PC-9 (cell line): ENCODE measurements at regions of chr5 and their contacts with region 1.

Region 1: GRCh38 chr5:130520211-130520610 is 615.9 kb downstream of the CHSY3 start:
- DNase-seq: peak; percentile 8 to 63
- H3K4me3 ChIP-seq: no peak overlapping the region
- H3K27ac ChIP-seq: no peak overlapping the region
- H3K4me1 ChIP-seq: peaks cover 5% of the 10 kb centered on the region
- H3K27me3 ChIP-seq: no peaks in the 10 kb centered on the region
- CTCF ChIP-seq: no peak

Region 2: DNA sequence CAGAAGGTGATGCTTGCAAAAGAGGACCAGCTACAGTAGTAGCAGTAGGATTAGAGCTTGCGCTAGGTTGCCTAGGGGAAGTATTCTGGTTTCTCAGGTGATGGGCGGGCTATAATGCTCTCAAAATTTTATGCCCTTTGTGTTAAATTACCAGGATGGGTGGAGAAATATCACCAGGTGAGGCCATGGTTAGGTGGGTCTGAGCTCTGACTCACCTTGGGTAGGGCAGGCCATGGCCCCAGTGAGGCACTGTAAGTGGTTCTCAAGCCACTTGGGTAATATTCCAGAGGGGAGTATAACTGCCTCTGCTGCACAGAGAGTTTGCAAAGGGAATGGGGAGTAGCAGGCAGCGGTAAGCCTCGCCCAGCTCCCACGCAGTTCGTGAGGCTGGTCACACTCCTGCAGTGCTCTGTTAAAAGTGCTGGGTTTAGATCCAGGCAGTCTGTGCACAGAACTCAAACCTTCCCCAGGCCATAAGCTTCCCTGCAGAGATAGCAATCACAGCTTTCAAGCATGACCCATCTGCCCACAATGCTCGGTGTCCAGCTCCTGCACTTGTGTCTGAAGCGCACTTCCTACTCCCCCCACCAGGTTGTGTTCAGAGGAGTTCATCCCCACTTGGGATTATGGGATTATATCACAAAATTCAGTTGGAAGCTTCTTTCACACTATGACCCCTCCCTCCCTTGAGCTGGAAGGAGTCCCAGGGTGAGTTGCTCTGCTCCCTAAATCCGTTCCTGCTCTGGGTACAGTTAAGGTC is 41.0 kb before region 1 on chr5:
- CTCF ChIA-PET with region 1: no interaction called
- POLR2A ChIA-PET with region 1: interaction called, 10 read pairs
- intact Hi-C with region 1: no loop called
- DNase-seq: peak; percentile 37 to 53
- H3K4me3 ChIP-seq: no peak overlapping the region
- H3K27ac ChIP-seq: no peak overlapping the region
- H3K4me1 ChIP-seq: no peaks in the 10 kb centered on the region
- H3K27me3 ChIP-seq: no peaks in the 10 kb centered on the region
- CTCF ChIP-seq: no peak

Region 3: GRCh38 chr5:130568791-130569190 is 48.6 kb after region 1 on chr5:
- CTCF ChIA-PET with region 1: no interaction called
- POLR2A ChIA-PET with region 1: interaction called, 18 read pairs
- intact Hi-C with region 1: no loop called
- DNase-seq: no peak
- H3K4me3 ChIP-seq: no peak overlapping the region
- H3K27ac ChIP-seq: no peak overlapping the region
- H3K4me1 ChIP-seq: no peaks in the 10 kb centered on the region
- H3K27me3 ChIP-seq: no peaks in the 10 kb centered on the region
- CTCF ChIP-seq: no peak

Region 4: GRCh38 chr5:130805648-130806047 is 285.4 kb after region 1 on chr5:
- CTCF ChIA-PET with region 1: no interaction called
- POLR2A ChIA-PET with region 1: no interaction called
- intact Hi-C with region 1: no loop called
- DNase-seq: no peak
- H3K4me3 ChIP-seq: no peak overlapping the region
- H3K27ac ChIP-seq: no peak overlapping the region
- H3K4me1 ChIP-seq: no peaks in the 10 kb centered on the region
- H3K27me3 ChIP-seq: no peaks in the 10 kb centered on the region
- CTCF ChIP-seq: no peak

Region 5: GRCh38 chr5:131983244-131983771 is 1463.1 kb after region 1 on chr5:
- CTCF ChIA-PET with region 1: no interaction called
- POLR2A ChIA-PET with region 1: no interaction called
- intact Hi-C with region 1: no loop called
- DNase-seq: no peak
- H3K4me3 ChIP-seq: no peak overlapping the region
- H3K27ac ChIP-seq: no peak overlapping the region
- H3K4me1 ChIP-seq: no peaks in the 10 kb centered on the region
- H3K27me3 ChIP-seq: 0 out of 2 replicates have a peak, but pooled peaks cover 5% of the 10 kb centered on the region
- CTCF ChIP-seq: no peak